ENCODE measurements at regions of chr17 and their contacts with region 1.

Region 1: DNA sequence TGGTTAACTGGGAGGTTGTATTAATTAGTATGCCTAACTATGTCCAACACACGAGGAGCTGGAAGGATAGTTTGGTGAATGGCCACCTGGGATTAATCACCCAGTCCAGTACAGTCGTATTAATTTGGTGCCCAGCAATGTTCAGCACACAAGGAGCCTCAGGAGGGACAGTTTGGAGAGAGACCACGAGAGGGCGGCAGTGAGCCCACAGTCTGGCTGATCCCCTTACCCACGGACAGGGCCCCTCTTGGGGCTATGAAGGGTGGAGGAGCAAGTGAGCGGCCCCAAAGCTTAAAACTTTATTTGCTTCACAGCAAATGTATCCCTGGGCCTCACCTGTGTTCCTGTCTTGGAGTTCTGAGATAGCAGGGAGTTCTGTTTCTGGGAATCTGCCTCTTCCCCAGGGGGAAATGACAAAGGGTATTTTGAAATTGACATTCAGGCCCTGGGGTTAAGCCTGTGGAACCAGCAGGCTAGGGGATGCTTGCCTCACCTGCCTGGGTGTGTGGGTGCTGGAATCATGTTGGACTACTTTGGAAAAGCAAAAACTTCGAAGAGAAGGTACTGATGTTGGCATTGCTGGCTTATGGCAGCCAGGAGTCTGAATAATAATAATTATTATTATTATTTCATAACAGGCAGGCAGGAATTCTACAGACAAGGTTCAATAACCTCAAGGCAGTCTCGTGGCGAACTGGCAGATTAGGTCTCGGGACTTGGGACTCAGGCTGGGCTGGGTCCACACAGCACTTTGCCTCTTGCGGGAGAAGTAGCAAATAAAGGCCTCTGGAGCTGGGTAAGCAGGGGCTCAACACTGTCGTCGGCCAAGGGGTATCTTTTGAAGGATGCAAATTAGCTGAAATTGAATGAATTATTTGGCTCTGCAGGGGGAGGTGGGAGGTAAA is 227.6 kb upstream of the ASIC2 start:
- DNase-seq: peak in 4 of 5 donors; percentile 29 to 68 (median 39)
- ATAC-seq: peak in 2 of 4 donors; percentile 42 to 67
- H3K4me3 ChIP-seq: no peak overlapping the region
- H3K27ac ChIP-seq: no peak overlapping the region
- H3K4me1 ChIP-seq: no peaks in the 10 kb centered on the region
- H3K27me3 ChIP-seq: peaks cover 0 to 8% (median 0%) of the 10 kb centered on the region in 9 donors
- CTCF ChIP-seq: peak; percentile 55 to 81 (median 71)
- POLR2A ChIP-seq: no peak

Region 2: DNA sequence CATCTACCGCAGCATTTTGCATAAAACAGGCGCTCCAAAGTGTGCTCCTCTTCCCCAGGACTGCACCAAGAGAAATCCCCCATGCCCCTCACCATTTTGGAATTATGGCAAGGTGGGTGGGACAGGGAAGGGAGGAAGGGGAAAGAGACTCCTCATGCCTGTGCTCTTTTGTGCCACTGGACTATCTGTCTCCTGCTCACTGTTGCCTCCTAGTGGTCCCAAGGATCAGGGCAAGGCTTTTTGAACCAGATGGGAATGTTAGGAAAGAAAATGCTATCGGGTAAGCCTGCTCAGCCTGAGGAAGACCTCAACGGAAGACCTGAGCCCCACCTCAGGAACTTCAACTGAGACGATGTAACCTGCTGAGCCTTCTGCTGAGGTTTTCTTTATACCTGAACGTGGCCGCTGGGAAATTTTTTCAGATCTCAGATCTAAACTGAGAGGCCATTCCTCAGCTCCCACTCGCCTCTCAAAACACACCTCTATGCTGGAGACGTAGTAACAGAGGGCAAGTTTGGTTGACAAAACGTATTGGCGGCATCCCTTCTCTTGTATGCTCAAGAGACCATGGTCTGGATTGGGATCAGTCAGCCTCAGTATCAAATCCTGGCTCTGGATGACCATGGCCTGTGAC is 470.8 kb before region 1 on chr17:
- intact Hi-C with region 1: loop called in 1 of 10 experiments (anchors 10 kb)
- DNase-seq: peak in 3 of 5 donors; percentile 21 to 42 (median 34)
- ATAC-seq: no peak
- H3K4me3 ChIP-seq: no peak overlapping the region
- H3K27ac ChIP-seq: no peak overlapping the region
- H3K4me1 ChIP-seq: peaks cover 0 to 1% (median 0%) of the 10 kb centered on the region in 12 donors
- H3K27me3 ChIP-seq: peaks cover 0 to 21% (median 0%) of the 10 kb centered on the region in 9 donors
- CTCF ChIP-seq: peak; percentile 59 to 84 (median 76)
- POLR2A ChIP-seq: no peak

Region 3: DNA sequence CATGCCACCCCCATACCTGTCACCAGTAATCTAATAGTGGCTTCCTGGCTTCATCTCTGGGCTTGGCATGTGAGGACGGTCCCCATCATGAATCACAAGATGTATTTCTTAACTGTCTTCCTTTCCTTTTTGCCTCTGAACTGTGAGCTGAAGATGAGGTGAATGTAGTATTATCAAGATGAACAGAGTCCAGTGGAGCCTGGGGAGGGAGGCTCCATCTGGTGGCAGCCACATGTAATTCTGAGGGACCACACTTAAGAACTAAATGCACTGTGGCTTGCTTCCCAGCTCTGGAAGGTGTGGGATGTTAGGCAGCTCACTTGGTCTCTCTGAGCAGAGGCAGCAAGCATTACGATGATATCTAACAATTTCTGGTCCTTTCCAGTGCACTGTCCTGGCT is 127.3 kb after region 1 on chr17:
- intact Hi-C with region 1: loop called in 1 of 10 experiments (anchors 10 kb)
- DNase-seq: no peak
- ATAC-seq: no peak
- H3K4me3 ChIP-seq: no peak overlapping the region
- H3K27ac ChIP-seq: no peak overlapping the region
- H3K4me1 ChIP-seq: peaks cover 0 to 8% (median 0%) of the 10 kb centered on the region in 12 donors
- H3K27me3 ChIP-seq: peaks cover 0 to 25% (median 3%) of the 10 kb centered on the region in 9 donors
- CTCF ChIP-seq: peak in 9 of 12 donors; percentile 12 to 52 (median 35)
- POLR2A ChIP-seq: no peak

Region 4: DNA sequence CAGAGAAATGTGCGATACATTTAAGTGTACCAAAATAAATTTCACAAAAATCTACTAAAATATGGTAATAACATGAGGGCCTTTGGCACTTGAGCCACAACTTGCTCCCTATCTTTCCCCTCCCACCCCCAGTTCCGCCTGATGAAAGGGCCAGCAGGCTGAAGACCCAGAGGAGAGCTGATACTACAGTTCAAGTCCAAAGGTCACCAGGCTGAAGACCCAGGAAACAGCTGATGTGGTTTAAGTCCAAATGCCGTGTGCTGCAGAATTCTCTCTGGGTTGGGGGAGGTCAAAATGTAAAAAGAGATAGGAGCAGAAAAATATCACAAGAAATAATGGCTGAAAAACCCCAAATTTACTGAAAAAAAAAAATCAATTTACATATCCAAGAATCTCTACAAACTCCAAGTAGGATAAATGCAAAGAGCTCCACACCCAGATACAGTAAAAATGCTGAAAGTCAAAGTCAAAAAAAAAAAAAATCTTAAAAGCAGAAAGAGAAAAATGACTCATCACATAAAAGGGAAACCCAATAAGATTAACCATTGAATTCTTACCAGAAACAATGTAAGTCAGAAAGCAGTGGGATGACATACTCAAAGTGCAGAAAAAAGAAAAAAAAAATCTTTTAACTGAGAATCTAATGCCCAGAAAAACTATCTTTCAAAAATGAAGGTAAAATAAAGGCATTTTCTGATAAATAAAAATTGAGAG is 224.5 kb after region 1 on chr17:
- intact Hi-C with region 1: loop called in 6 of 10 experiments (anchors 5 to 10 kb)
- DNase-seq: no peak
- ATAC-seq: no peak
- H3K4me3 ChIP-seq: no peak overlapping the region
- H3K27ac ChIP-seq: no peak overlapping the region
- H3K4me1 ChIP-seq: no peaks in the 10 kb centered on the region
- H3K27me3 ChIP-seq: peaks cover 0 to 39% (median 0%) of the 10 kb centered on the region in 9 donors
- CTCF ChIP-seq: no peak
- POLR2A ChIP-seq: no peak